ENCODE measurements at regions of chrX and their contacts with region 1.

Region 1: GRCh38 chrX:16870095-16870860 is at the start of gene RBBP7:
- DNase-seq: peak; percentile 85
- ATAC-seq: peak; percentile 81
- H3K4me3 Mint-ChIP-seq: peak within 1 kb of the TSS; percentile 91
- H3K27ac Mint-ChIP-seq: peak within 1 kb of the TSS; percentile 94
- H3K4me1 Mint-ChIP-seq: peaks cover 49% of the 10 kb centered on the region
- H3K27me3 Mint-ChIP-seq: no peaks in the 10 kb centered on the region
- CTCF ChIP-seq: no peak
- total RNA-seq, gene RBBP7: 97.9 and 103 TPM in 2 replicates

Region 2: DNA sequence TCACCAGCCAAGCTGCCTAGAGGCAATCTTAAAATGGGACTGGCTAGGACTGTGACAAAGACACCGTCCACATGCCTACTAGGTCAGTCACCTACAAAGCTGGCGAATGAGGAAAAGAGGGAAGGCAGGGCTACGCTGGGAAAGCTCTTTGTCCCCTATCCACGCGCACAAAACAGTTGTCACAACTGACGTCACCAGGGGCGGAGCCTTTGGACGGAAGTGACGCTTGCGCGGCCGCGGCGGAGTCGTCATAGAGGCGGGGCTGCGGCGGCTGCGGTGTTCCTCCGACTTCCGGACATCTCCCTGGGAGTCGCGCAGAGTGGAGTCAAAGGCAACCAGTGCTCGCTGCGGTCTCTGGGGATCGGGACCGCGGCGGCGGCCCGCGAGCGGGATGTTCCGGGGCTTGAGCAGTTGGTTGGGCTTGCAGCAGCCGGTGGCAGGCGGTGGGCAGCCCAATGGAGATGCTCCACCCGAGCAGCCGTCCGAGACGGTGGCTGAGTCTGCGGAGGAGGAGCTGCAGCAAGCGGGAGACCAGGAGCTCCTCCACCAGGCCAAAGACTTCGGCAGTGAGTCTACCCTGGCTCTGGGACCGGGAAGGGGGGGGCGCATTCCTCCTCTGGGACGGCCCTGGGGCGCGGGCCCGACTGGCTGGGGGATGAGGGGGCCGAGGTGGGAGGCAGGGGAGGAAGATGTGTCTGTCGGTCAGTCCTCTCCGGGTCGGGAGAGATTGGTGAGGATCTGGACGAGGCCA is 150.8 kb before region 1 on chrX and contains the start of gene SYAP1:
- CTCF ChIA-PET with region 1: no interaction called
- POLR2A ChIA-PET with region 1: no interaction called
- intact Hi-C with region 1: loop called (anchors 5 kb)
- DNase-seq: peak; percentile 87
- ATAC-seq: peak; percentile 93
- H3K4me3 Mint-ChIP-seq: peak within 1 kb of the TSS; percentile 90
- H3K27ac Mint-ChIP-seq: peak within 1 kb of the TSS; percentile 94
- H3K4me1 Mint-ChIP-seq: peaks cover 15% of the 10 kb centered on the region
- H3K27me3 Mint-ChIP-seq: no peaks in the 10 kb centered on the region
- CTCF ChIP-seq: no peak
- total RNA-seq, gene SYAP1: 14.9 and 16.8 TPM in 2 replicates

Region 3: GRCh38 chrX:16855363-16856075 is 14.8 kb before region 1 on chrX:
- CTCF ChIA-PET with region 1: no interaction called
- POLR2A ChIA-PET with region 1: interaction called, 10 read pairs
- intact Hi-C with region 1: loop called (anchors 1 kb)
- DNase-seq: no peak
- ATAC-seq: peak; percentile 89
- H3K4me3 Mint-ChIP-seq: no peak overlapping the region
- H3K27ac Mint-ChIP-seq: peak overlapping the region; percentile 75
- H3K4me1 Mint-ChIP-seq: peaks cover 21% of the 10 kb centered on the region
- H3K27me3 Mint-ChIP-seq: no peaks in the 10 kb centered on the region
- CTCF ChIP-seq: no peak

Region 4: DNA sequence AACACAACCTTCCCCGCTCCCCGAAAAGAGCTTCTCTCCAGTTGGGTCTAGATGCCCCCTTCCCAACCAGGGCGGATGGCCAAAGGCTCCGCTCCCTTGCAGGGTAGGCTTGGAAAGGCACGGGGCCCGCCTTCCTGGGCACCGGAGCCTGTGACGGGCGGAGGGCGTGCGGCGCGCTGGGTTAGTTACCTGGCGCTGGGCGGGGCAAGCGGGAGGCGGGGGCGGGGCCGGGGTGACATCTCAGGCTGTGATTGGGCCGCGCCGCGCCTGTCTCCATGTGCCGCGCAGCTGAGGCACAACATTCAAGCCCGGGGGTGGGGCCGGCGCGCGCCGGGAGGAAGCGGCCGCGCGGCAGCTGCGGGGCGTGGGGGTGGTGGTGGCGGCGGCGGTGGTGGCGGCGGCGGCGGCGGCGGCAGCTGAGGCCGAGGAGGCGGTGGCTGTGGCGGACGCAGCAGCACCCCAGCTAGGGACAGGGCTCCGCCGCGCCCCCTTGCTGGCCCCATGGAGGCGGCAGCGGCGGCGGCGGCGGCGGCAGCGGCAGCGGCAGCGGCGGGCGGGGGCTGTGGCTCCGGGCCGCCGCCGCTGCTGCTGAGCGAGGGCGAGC is 76.2 kb after region 1 on chrX and contains the start of gene REPS2:
- CTCF ChIA-PET with region 1: no interaction called
- POLR2A ChIA-PET with region 1: no interaction called
- intact Hi-C with region 1: loop called (anchors 1 kb)
- DNase-seq: peak; percentile 57
- ATAC-seq: peak; percentile 98
- H3K4me3 Mint-ChIP-seq: peak within 1 kb of the TSS; percentile 86
- H3K27ac Mint-ChIP-seq: peak within 1 kb of the TSS; percentile 59
- H3K4me1 Mint-ChIP-seq: peaks cover 10% of the 10 kb centered on the region
- H3K27me3 Mint-ChIP-seq: no peaks in the 10 kb centered on the region
- CTCF ChIP-seq: no peak
- total RNA-seq, gene REPS2: 1.6 and 2.0 TPM in 2 replicates

Region 5: DNA sequence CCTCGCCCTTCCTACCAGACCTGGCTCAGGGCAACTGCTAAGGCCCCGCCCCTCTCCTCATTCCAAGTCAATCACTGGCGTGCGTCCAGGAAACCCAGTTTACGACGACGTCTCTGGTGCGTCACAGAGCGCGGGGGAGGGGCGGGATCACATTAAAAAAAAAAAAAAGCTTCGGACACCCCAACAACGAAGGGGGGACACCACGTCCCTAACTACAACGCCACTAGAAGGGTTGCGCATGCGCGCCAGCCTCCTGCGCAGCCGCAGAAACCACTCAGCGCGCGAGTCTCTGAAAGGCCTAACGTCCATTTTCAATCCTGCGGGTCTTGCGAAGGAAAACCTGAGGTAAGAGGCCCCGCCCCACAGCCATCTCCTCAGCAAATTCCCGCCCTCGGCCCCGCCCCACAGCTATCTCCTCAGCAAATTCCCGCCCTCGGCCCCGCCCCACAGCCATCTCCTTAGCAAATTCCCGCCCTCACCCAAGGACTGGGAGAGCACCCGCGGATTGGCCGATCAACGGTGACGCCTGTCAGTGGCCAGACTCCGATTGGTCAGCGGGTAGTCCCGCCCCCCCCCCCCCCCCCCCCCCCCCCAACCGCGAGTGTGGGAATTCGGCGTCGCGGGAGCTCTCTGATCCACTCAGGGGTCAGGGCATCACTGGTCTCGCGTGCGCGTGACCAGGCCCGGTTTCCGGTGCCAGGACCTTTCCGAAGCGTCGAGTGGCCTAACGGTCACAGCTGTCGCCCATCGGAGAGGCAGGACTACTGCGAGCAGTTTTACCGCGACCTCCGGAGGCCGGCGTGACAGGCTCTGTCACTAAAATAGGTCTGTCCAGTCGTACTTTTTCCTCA is 866.8 kb after region 1 on chrX and contains the start of gene SCML1:
- CTCF ChIA-PET with region 1: no interaction called
- POLR2A ChIA-PET with region 1: interaction called, 3 read pairs
- intact Hi-C with region 1: loop called (anchors 2 kb)
- DNase-seq: peak; percentile 66
- ATAC-seq: peak; percentile 88
- H3K4me3 Mint-ChIP-seq: peak within 1 kb of the TSS; percentile 84
- H3K27ac Mint-ChIP-seq: peak within 1 kb of the TSS; percentile 74
- H3K4me1 Mint-ChIP-seq: peaks cover 15% of the 10 kb centered on the region
- H3K27me3 Mint-ChIP-seq: no peaks in the 10 kb centered on the region
- CTCF ChIP-seq: no peak
- total RNA-seq, gene SCML1: 6.4 and 6.5 TPM in 2 replicates

Region 6: GRCh38 chrX:18279009-18279408 is 1408.7 kb after region 1 on chrX:
- CTCF ChIA-PET with region 1: no interaction called
- POLR2A ChIA-PET with region 1: no interaction called
- intact Hi-C with region 1: no loop called
- DNase-seq: no peak
- ATAC-seq: no peak
- H3K4me3 Mint-ChIP-seq: no peak overlapping the region
- H3K27ac Mint-ChIP-seq: no peak overlapping the region
- H3K4me1 Mint-ChIP-seq: no peaks in the 10 kb centered on the region
- H3K27me3 Mint-ChIP-seq: no peaks in the 10 kb centered on the region
- CTCF ChIP-seq: no peak

Measured in activated B cell treated with CpG ODN at 0.5 μM for 24 hours (primary cell).